ENCODE measurements at regions of chr6 and their contacts with region 1.

Region 1: GRCh38 chr6:12735786-12736185 is 19.2 kb downstream of the PHACTR1 start:
- DNase-seq: no peak
- ATAC-seq: no peak
- H3K4me3 ChIP-seq: no peak overlapping the region
- H3K27ac ChIP-seq: no peak overlapping the region
- H3K4me1 ChIP-seq: no peaks in the 10 kb centered on the region
- H3K27me3 ChIP-seq: no peaks in the 10 kb centered on the region
- CTCF ChIP-seq: no peak

Region 2: GRCh38 chr6:13924949-13925881 is 1189.4 kb after region 1 on chr6 and contains the start of gene RNF182:
- intact Hi-C with region 1: loop called in 1 of 10 experiments (anchors 5 kb)
- DNase-seq: no peak
- ATAC-seq: peak in 4 of 8 donors; percentile 38 to 76 (median 64)
- H3K4me3 ChIP-seq: peak within 1 kb of the TSS in 9 of 10 donors; percentile 23 to 52 (median 45)
- H3K27ac ChIP-seq: no peak within 1 kb of the TSS
- H3K4me1 ChIP-seq: peaks cover 0 to 17% (median 13%) of the 10 kb centered on the region in 9 donors
- H3K27me3 ChIP-seq: peaks cover 8 to 97% (median 70%) of the 10 kb centered on the region in 7 donors
- CTCF ChIP-seq: no peak
- total RNA-seq, gene RNF182: 0.07 TPM in 1 of 10 donors, not detected in the others

Measured in heart right ventricle (tissue), 16 donors.